ENCODE measurements at regions of chr18 and their contacts with region 1.

Region 1: DNA sequence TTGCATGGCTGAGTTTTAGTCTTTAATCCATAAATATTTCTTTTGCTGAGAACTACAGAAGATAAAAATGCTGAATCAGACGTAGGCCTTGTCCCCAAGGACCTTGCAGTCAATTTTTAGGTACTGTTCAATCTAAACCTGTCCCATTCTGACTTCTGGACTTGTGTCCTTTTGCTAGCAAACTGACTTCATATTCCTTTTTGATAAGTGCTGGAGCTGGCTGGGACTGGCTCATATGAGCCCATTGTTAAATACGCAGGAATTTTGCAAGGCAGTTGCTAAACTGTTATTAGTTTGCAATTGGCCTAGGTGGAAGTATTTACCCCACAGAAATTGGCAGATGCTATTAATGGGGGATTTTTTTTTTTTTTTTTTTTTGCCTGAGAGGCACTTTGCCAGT is 941.4 kb downstream of the DCC start:
- DNase-seq: no peak
- ATAC-seq: no peak

Region 2: DNA sequence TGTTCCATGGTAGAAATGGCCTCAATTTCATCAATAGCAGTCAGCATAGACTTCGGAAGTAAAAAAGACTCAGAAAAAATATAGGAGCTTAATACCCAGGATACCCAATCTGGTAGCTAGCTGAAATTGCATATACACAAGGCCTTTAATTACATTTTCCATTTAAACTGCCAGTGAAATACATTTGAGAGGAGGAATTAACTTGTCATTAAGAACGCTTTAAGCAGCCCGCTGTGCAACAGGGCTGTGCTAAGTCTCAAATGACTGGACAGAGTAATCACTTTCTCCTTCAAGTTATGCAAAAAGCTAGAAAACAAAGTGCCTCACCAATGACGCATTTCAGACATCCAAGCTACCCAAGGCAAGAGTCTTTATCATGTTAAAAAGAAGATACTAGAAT is 384.3 kb after region 1 on chr18:
- intact Hi-C with region 1: loop called in 1 of 2 experiments (anchors 10 kb)
- DNase-seq: no peak
- ATAC-seq: no peak

Measured in left colon (tissue), 2 donors.